Caco-2 (cell line): ENCODE measurements at regions of chr5 and their contacts with region 1.

Region 1: DNA sequence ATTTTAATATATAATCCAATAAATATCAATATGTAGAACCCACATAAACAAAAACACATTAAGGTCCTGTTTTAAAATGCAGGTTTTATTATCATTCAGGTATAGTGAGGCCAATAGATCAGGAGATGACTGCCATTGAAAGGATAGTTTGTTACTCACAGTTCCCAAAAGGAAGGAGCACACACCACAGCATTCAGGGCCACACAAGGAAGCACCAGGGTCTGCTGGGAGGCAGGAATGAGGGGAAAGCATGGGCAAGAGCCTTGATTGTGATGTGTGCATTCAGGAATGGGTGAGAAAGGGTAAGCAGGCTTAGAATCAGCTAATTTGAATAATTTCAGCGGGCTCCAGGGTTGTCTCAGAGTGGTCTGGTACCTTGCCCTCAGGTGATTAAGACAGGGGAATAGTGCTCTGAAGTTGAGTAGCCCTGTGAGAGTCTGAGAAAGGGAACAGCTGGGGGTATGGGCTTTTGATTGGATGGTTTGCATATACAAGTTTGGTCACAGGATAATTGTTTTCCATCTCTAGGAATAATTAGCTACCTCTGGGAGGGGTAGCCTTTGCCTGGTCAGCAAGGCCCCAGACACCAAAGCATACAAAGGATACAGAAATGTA is 19.8 kb upstream of the OTULIN start:
- DNase-seq: no peak
- H3K4me3 ChIP-seq: no peak overlapping the region
- H3K4me3 Mint-ChIP-seq: no peak overlapping the region
- H3K27ac Mint-ChIP-seq: no peak overlapping the region
- H3K4me1 ChIP-seq: no peaks in the 10 kb centered on the region
- H3K4me1 Mint-ChIP-seq: no peaks in the 10 kb centered on the region
- H3K27me3 ChIP-seq: no peaks in the 10 kb centered on the region
- H3K27me3 Mint-ChIP-seq: peaks cover 12% of the 10 kb centered on the region
- CTCF ChIP-seq: no peak

Region 2: GRCh38 chr5:14351845-14352712 is 292.7 kb before region 1 on chr5:
- CTCF ChIA-PET with region 1: interaction called, 19 read pairs
- POLR2A ChIA-PET with region 1: no interaction called
- intact Hi-C with region 1: loop called (anchors 1 kb)
- DNase-seq: peak; percentile 51 to 66
- H3K4me3 ChIP-seq: no peak overlapping the region
- H3K4me3 Mint-ChIP-seq: no peak overlapping the region
- H3K27ac Mint-ChIP-seq: no peak overlapping the region
- H3K4me1 ChIP-seq: no peaks in the 10 kb centered on the region
- H3K4me1 Mint-ChIP-seq: no peaks in the 10 kb centered on the region
- H3K27me3 ChIP-seq: no peaks in the 10 kb centered on the region
- H3K27me3 Mint-ChIP-seq: no peaks in the 10 kb centered on the region
- CTCF ChIP-seq: peak; percentile 91 to 97

Region 3: DNA sequence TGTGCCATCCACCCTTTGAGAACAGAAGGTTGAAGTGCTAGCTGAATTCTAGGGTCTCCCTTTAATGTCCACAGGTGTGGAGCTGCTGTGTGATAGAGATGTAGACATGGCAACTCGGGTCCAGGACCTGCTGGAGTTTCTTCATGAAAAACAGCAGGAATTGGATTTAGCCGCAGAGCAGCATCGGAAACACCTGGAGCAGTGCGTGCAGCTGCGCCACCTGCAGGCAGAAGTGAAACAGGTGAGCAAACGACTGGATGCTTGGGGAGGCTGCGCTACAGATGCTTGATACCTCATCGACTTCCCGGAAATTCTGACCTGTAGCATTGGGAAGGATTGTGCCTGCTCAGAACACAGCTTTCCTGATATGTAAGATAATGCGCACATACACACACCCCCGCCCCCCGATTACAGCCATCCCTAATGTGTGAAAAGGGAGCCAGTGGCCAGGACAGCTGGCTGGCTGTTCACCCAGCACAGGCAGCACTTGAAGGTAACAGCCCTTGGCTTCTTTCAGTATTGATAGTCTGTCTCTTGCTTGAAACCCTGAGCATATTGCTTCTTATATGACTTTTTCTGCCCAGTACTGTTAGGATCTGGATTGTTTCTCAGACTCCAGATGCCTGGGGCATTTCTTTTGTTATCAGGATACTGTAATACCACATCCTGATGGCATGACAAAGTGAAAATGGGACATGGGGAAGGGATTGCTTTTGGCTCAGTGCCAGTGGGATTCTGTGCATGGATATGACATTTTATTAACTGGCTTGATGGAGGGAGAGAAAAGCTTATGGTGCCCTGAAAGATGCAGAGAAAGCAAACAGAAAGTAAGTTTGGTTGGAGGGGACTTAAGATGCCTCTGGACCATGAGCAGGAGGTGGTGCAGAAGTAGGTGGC is 279.9 kb before region 1 on chr5:
- CTCF ChIA-PET with region 1: interaction called, 7 read pairs
- POLR2A ChIA-PET with region 1: no interaction called
- intact Hi-C with region 1: loop called (anchors 1 kb)
- DNase-seq: peak; percentile 60 to 63
- H3K4me3 ChIP-seq: no peak overlapping the region
- H3K4me3 Mint-ChIP-seq: no peak overlapping the region
- H3K27ac Mint-ChIP-seq: no peak overlapping the region
- H3K4me1 ChIP-seq: no peaks in the 10 kb centered on the region
- H3K4me1 Mint-ChIP-seq: no peaks in the 10 kb centered on the region
- H3K27me3 ChIP-seq: no peaks in the 10 kb centered on the region
- H3K27me3 Mint-ChIP-seq: no peaks in the 10 kb centered on the region
- CTCF ChIP-seq: peak; percentile 72 to 90

Region 4: GRCh38 chr5:14399054-14399692 is 245.6 kb before region 1 on chr5:
- CTCF ChIA-PET with region 1: interaction called, 12 read pairs
- POLR2A ChIA-PET with region 1: no interaction called
- intact Hi-C with region 1: loop called (anchors 1 kb)
- DNase-seq: peak in 1 of 2 experiments; percentile 39
- H3K4me3 ChIP-seq: no peak overlapping the region
- H3K4me3 Mint-ChIP-seq: no peak overlapping the region
- H3K27ac Mint-ChIP-seq: no peak overlapping the region
- H3K4me1 ChIP-seq: no peaks in the 10 kb centered on the region
- H3K4me1 Mint-ChIP-seq: no peaks in the 10 kb centered on the region
- H3K27me3 ChIP-seq: no peaks in the 10 kb centered on the region
- H3K27me3 Mint-ChIP-seq: no peaks in the 10 kb centered on the region
- CTCF ChIP-seq: peak; percentile 44 to 71

Region 5: GRCh38 chr5:14497311-14497710 is 147.4 kb before region 1 on chr5:
- CTCF ChIA-PET with region 1: no interaction called
- POLR2A ChIA-PET with region 1: no interaction called
- intact Hi-C with region 1: loop called (anchors 5 kb)
- DNase-seq: no peak
- H3K4me3 ChIP-seq: no peak overlapping the region
- H3K4me3 Mint-ChIP-seq: no peak overlapping the region
- H3K27ac Mint-ChIP-seq: no peak overlapping the region
- H3K4me1 ChIP-seq: no peaks in the 10 kb centered on the region
- H3K4me1 Mint-ChIP-seq: no peaks in the 10 kb centered on the region
- H3K27me3 ChIP-seq: no peaks in the 10 kb centered on the region
- H3K27me3 Mint-ChIP-seq: no peaks in the 10 kb centered on the region
- CTCF ChIP-seq: no peak